ENCODE measurements at regions of chr6 and their contacts with region 1.

Region 1: GRCh38 chr6:44058617-44059358 is 68.5 kb downstream of the MRPL14 start:
- DNase-seq: peak; percentile 88
- ATAC-seq: peak; percentile 38 to 84

Region 2: DNA sequence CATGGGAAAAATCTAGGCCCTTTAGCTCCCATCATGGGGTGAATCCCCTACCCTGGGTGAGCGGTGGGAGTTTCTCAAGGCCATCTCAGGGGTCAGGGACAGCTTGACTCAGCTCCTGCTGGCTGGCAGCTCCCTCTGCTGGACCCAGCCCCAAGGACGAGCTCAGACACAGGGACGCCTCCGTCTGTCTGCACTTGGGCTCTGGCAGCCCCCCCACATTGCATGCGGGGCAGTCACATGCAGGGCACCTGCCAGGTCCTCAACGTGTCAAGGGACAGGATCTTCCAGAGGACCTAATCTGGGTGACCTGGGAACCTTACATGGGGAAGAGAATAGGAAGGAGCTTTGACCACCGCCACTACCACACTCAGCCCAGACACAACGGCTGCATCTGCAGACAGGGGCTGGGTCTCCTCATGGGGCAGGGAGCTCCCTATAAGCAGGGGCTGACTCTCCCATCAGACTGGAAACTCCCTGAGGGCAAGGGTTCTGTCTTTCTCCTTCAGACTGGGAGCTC is 104.9 kb before region 1 on chr6:
- intact Hi-C with region 1: no loop called
- DNase-seq: peak; percentile 58
- ATAC-seq: peak; percentile 46 to 72

Region 3: DNA sequence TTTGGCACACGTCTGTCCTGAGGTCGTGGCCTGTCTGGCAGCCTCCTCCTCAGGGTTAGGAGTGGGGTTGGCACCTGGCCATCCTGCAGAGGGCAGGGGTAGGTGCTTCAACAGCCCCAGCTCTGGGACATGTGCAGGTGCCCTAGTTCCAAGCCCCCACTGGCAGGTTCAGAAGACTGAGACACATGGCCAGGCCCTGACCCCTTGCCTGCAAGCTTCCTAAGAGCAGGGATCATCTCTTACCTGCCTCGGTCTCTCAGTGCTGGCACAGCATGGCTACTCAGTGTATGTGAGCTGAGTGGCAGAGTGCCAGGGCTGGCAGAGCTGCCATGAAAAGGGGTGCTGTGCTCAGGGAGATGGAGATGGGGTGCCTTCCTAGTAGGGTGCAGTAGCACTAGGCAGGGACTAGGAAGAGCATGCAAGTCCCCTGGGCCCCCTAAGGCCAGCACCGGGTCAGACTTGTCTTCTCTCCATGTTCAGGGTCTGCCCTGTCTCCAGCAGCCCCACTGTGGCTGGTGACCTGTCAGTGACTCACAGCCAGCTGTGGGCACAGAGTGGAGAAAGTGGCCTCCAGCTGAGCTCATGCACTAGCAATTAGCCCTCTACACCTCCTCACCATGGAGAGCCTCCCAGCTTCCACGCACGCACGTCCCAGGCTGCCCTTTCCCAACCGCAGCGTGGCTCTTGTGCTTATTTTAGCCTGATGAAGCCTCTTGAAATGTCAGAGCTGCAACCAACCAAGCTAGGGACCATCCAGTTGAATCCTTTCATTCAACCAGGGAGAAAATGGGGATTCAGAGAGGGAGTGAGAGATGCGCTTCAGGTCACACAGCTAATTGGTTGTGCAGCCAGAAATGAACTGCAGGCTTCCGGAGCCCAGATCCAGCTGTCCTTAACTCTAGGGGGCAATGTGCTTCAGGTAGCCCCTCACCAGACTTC is 48.1 kb before region 1 on chr6:
- intact Hi-C with region 1: loop called in 1 of 2 experiments (anchors 5 kb)
- DNase-seq: peak; percentile 65
- ATAC-seq: peak; percentile 75 to 86